Activated CD4-positive, alpha-beta T cell treated with anti-CD3 and anti-CD28 coated beads for 36 hours (primary cell): ENCODE measurements at regions of chr12 and their contacts with region 1.

Region 1: GRCh38 chr12:47698055-47698454 is 7.8 kb downstream of the RPAP3 start:
- DNase-seq: no peak
- ATAC-seq: no peak
- H3K4me3 Mint-ChIP-seq: no peak overlapping the region
- H3K27ac Mint-ChIP-seq: no peak overlapping the region
- H3K4me1 Mint-ChIP-seq: peaks cover 9% of the 10 kb centered on the region
- H3K27me3 Mint-ChIP-seq: no peaks in the 10 kb centered on the region

Region 2: DNA sequence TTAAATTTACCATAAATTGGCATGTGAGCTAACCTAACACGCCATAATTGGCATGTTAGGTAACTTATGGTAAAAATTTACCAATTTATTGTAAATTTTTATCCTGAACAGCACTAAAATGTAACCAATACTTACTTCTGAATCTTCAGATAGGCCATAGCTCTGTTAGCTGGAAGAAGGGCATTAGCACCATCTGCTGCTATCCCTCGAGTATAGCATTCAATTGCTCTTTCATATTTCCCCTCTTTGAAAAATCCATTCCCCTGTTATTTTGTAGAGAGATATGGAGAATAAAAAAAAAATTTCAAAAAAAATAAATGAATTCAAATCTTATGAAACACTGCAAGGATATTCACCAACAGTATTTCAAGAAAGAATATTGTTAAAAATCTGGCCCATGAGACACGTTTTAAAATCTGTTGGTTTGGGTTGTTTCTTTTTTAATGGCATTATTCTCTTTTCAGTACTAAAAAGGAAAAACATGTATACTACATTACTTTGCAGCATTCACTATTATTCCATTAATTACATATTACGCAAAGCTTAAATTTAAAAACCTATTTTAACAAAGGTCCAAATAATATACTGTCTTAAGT is 11.3 kb before region 1 on chr12:
- CTCF ChIA-PET with region 1: interaction called, 11 read pairs
- POLR2A ChIA-PET with region 1: no interaction called
- intact Hi-C with region 1: no loop called
- DNase-seq: peak; percentile 42
- ATAC-seq: no peak
- H3K4me3 Mint-ChIP-seq: no peak overlapping the region
- H3K27ac Mint-ChIP-seq: no peak overlapping the region
- H3K4me1 Mint-ChIP-seq: peaks cover 11% of the 10 kb centered on the region
- H3K27me3 Mint-ChIP-seq: no peaks in the 10 kb centered on the region

Region 3: DNA sequence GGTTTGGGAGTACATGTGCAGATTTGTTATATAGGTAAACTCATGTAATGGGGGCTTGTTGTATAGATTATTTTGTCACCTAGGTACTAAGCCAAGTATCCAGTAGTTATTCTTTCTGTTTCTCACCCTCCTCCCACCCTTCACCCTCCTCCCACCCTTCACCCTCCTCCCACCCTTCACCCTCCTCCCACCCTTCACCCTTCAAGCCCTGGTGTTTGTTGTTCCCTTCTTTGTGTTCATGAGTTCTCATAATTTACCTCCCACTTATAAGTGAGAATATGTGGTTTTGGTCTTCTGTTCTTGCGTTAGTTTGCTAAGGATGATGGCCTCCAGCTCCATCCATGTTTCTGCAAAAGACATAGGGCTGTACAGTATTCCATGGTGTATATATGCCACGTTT is 563.7 kb after region 1 on chr12:
- CTCF ChIA-PET with region 1: no interaction called
- POLR2A ChIA-PET with region 1: no interaction called
- intact Hi-C with region 1: no loop called
- DNase-seq: no peak
- ATAC-seq: no peak
- H3K4me3 Mint-ChIP-seq: no peak overlapping the region
- H3K27ac Mint-ChIP-seq: no peak overlapping the region
- H3K4me1 Mint-ChIP-seq: no peaks in the 10 kb centered on the region
- H3K27me3 Mint-ChIP-seq: peaks cover 9% of the 10 kb centered on the region